Endothelial cell of umbilical vein (primary cell): ENCODE measurements at regions of chr7 and their contacts with region 1.

Region 1: GRCh38 chr7:106779877-106780276 is 85.2 kb upstream of the PIK3CG start:
- DNase-seq: no peak
- H3K4me3 ChIP-seq: no peak overlapping the region
- H3K27ac ChIP-seq: no peak overlapping the region
- H3K4me1 ChIP-seq: peaks cover 16% of the 10 kb centered on the region
- H3K27me3 ChIP-seq: no peaks in the 10 kb centered on the region
- CTCF ChIP-seq: no peak
- POLR2A ChIP-seq: no peak

Region 2: GRCh38 chr7:106216517-106216922 is 563.4 kb before region 1 on chr7:
- CTCF ChIA-PET with region 1: no interaction called
- POLR2A ChIA-PET with region 1: interaction called, 4 read pairs
- dilution Hi-C with region 1: no loop called
- intact Hi-C with region 1: loop called (anchors 2 kb)
- DNase-seq: peak; percentile 96
- H3K4me3 ChIP-seq: peak overlapping the region in 1 of 3 experiments; percentile 46
- H3K27ac ChIP-seq: peak overlapping the region; percentile 94
- H3K4me1 ChIP-seq: peaks cover 42% of the 10 kb centered on the region
- H3K27me3 ChIP-seq: no peaks in the 10 kb centered on the region
- CTCF ChIP-seq: no peak
- POLR2A ChIP-seq: peak; percentile 22

Region 3: GRCh38 chr7:106313456-106313901 is 466.4 kb before region 1 on chr7:
- CTCF ChIA-PET with region 1: no interaction called
- POLR2A ChIA-PET with region 1: no interaction called
- dilution Hi-C with region 1: no loop called
- intact Hi-C with region 1: no loop called
- DNase-seq: peak; percentile 40
- H3K4me3 ChIP-seq: no peak overlapping the region
- H3K27ac ChIP-seq: peak overlapping the region; percentile 87
- H3K4me1 ChIP-seq: peaks cover 15% of the 10 kb centered on the region
- H3K27me3 ChIP-seq: no peaks in the 10 kb centered on the region
- CTCF ChIP-seq: no peak
- POLR2A ChIP-seq: no peak

Region 4: GRCh38 chr7:106604303-106604923 is 175.5 kb before region 1 on chr7:
- CTCF ChIA-PET with region 1: no interaction called
- POLR2A ChIA-PET with region 1: no interaction called
- dilution Hi-C with region 1: no loop called
- intact Hi-C with region 1: no loop called
- DNase-seq: peak; percentile 41
- H3K4me3 ChIP-seq: no peak overlapping the region
- H3K27ac ChIP-seq: no peak overlapping the region
- H3K4me1 ChIP-seq: peaks cover 12% of the 10 kb centered on the region
- H3K27me3 ChIP-seq: no peaks in the 10 kb centered on the region
- CTCF ChIP-seq: no peak
- POLR2A ChIP-seq: no peak

Region 5: GRCh38 chr7:106679153-106679931 is 100.5 kb before region 1 on chr7:
- CTCF ChIA-PET with region 1: no interaction called
- POLR2A ChIA-PET with region 1: no interaction called
- dilution Hi-C with region 1: no loop called
- intact Hi-C with region 1: loop called (anchors 2 kb)
- DNase-seq: peak; percentile 73
- H3K4me3 ChIP-seq: no peak overlapping the region
- H3K27ac ChIP-seq: peak overlapping the region; percentile 47
- H3K4me1 ChIP-seq: peaks cover 22% of the 10 kb centered on the region
- H3K27me3 ChIP-seq: no peaks in the 10 kb centered on the region
- CTCF ChIP-seq: no peak
- POLR2A ChIP-seq: no peak

Region 6: GRCh38 chr7:106865130-106866041 is 85.5 kb after region 1 on chr7 and contains the start of gene PIK3CG:
- CTCF ChIA-PET with region 1: no interaction called
- POLR2A ChIA-PET with region 1: interaction called, 4 read pairs
- dilution Hi-C with region 1: no loop called
- intact Hi-C with region 1: loop called (anchors 5 kb)
- DNase-seq: peak; percentile 64
- H3K4me3 ChIP-seq: peak within 1 kb of the TSS; percentile 29 to 87 (median 80)
- H3K27ac ChIP-seq: peak within 1 kb of the TSS; percentile 51
- H3K4me1 ChIP-seq: peaks cover 25% of the 10 kb centered on the region
- H3K27me3 ChIP-seq: no peaks in the 10 kb centered on the region
- CTCF ChIP-seq: no peak
- POLR2A ChIP-seq: peak; percentile 50
- total RNA-seq, gene PIK3CG: 4.9 and 6.2 TPM in 2 replicates